OCI-LY7 (cell line): ENCODE measurements at regions of chr5 and their contacts with region 1.

Region 1: GRCh38 chr5:82406205-82406773 is 128.1 kb upstream of the RPS23 start:
- DNase-seq: no peak
- H3K4me3 ChIP-seq: no peak overlapping the region
- H3K27ac ChIP-seq: no peak overlapping the region
- H3K4me1 ChIP-seq: no peaks in the 10 kb centered on the region
- CTCF ChIP-seq: no peak

Region 2: DNA sequence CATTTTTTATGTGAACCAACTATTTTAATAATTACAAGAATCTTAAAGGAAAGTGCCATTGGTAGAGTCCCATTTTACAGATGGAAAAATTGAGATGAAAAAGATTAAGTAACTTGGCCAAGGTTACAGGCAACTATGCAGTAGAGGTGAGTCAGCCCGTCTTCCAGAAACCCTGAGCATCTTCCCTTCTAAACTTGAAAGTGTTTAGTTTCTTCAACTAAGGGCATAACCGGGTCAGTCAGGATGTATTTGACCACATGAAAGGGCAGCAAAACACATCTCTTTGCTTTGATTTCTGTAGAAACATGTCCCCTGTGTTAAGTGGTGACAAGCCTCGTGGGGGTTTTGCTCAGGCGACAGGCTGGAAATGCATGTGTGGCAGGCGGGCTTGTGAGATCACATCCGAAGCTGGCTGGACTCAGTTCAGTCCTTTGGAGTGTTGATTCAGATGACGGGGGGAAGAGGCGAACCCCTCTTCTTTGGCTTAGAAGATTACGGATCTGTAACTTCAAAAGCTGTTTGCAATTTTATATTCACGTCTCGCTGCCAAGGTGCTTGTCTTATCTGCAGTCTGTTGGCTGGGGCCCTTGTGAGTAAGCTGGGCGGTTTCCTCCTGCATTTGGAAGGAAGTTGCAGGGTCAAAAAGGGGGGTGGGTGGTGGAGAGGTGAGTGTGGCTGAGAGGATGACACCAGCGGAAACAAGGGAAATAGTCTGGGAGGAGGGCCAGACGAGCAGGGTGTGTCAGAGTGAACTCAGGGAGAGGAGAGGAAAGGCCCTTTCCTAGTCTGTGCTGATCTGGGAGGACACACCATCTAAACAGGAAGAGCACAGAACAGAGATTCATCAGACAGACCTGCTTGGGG is 49.2 kb before region 1 on chr5:
- CTCF ChIA-PET with region 1: no interaction called
- POLR2A ChIA-PET with region 1: interaction called, 12 read pairs
- intact Hi-C with region 1: no loop called
- DNase-seq: no peak
- H3K4me3 ChIP-seq: no peak overlapping the region
- H3K27ac ChIP-seq: no peak overlapping the region
- H3K4me1 ChIP-seq: no peaks in the 10 kb centered on the region
- CTCF ChIP-seq: no peak